ENCODE measurements at regions of chr16 and their contacts with region 1.

Region 1: DNA sequence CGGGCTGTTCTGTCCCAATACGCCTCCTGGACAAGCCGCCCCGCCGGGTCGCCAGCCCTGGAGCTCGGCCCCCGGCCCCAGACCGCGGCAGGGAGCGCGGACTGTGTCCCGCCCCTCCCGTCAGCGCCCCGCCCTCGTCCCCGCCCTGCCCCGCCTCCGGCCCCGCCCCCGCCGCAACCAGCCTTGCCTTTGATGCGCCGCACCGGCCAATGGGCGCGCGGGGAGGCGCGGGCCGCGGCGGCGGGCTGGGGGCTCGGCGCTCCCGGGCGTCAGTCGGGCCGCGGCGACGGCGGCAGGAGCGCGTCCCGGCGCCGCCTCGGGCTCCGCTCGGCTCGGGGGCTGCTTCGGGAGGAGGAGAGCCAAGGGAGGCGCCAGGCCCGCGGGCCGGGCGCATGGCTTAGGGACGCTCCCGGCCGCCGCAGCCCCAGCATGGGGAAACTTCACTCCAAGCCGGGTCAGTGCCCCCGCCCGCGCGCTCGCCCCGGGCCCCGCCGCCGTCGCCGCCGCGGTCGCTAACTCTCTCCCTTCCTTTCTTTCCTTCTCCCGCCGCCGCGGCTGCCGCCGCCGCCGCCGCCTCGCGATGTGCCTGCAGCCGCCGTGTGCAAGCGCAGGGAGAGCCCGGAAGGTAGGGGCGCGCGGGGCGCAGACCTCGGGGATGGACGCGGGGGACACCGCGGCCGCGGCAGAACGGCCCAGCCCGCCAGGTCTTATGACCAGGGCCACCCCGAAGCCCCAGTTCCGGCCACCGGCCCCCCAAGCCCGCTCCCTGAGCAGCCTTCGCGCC is at the start of gene NKD1:
- DNase-seq: peak in 1 of 2 experiments; percentile 59
- H3K4me3 ChIP-seq: peak within 1 kb of the TSS; percentile 56; the same call in 1 of the 2 replicates
- H3K27ac ChIP-seq: no peak within 1 kb of the TSS
- H3K4me1 ChIP-seq: no peaks in the 10 kb centered on the region
- H3K27me3 ChIP-seq: no peaks in the 10 kb centered on the region
- CTCF ChIP-seq: no peak
- total RNA-seq, gene NKD1: 0.44 and 0.83 TPM in 2 replicates

Region 2: DNA sequence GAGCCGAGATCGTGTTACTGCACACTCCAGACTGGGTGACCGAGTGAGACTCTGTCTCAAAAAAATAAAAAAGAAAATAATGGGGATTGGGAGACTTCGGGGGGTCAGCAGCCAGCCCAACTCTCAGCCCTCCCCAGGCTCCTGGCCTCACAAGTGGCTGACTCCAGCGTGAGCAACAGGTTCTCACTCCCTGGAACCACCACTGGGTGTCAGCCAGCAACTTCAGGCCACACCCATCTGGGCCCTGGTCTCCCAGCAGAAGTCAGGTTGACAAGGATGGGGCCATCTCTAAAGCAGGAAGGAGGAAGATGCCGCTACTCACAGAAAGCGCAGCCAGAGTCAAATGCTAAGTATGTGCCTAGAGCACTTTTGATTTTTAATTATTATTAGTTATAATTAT is 1035.3 kb before region 1 on chr16:
- CTCF ChIA-PET with region 1: no interaction called
- POLR2A ChIA-PET with region 1: no interaction called
- intact Hi-C with region 1: no loop called
- DNase-seq: no peak
- H3K4me3 ChIP-seq: no peak overlapping the region
- H3K27ac ChIP-seq: no peak overlapping the region
- H3K4me1 ChIP-seq: no peaks in the 10 kb centered on the region
- H3K27me3 ChIP-seq: peaks cover 80% of the 10 kb centered on the region
- CTCF ChIP-seq: no peak

Region 3: DNA sequence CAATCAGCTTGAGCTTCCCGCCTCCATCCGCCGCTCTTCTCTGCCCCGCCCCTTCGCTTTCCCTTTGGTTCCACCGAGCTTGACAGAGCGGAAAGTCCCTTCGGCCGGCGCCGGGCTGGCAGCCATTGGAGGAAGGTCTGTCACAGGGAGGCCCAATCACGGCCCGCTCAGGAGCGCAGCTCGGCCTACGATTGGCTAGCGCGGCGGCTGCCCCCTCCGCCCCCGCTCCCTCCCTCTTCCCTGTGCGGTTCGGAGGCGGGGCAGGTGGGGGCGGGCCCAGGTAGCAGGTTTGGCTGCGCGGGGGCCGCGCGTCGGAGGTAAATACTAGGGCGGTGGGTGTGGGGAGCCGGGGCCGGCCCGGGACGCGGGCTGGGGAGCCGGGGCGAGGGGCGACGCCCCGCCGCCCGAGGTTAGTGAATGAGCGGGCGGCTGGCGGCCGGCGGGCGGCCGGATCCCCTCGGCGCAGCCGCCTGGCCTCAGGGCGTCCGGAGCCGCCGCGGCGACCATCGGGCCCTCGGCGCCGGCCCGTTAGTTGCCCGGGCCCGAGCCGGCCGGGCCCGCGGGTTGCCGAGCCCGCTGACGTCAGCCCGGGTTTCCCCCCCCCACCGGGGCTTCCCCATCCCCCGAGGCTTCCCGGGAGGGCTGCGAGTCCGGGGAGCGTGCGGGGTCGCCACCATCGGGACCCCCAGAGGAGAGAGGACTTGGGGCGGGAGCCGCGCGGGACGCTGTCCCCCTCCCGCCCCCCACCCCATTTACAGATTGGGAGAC is 193.7 kb after region 1 on chr16 and contains the start of gene CYLD:
- CTCF ChIA-PET with region 1: no interaction called
- POLR2A ChIA-PET with region 1: no interaction called
- intact Hi-C with region 1: loop called (anchors 10 kb)
- DNase-seq: peak; percentile 97 to 99
- H3K4me3 ChIP-seq: peak within 1 kb of the TSS; percentile 89
- H3K27ac ChIP-seq: peak within 1 kb of the TSS; percentile 29; the same call in 1 of the 2 replicates
- H3K4me1 ChIP-seq: peaks cover 34% of the 10 kb centered on the region
- H3K27me3 ChIP-seq: no peaks in the 10 kb centered on the region; the same call in 1 of the 2 replicates
- CTCF ChIP-seq: no peak
- total RNA-seq, gene CYLD: 12.6 and 19.0 TPM in 2 replicates